Naive thymus-derived CD4-positive, alpha-beta T cell (primary cell): ENCODE measurements at regions of chr20 and their contacts with region 1.

Region 1: GRCh38 chr20:47725248-47725973 is 59.9 kb downstream of the SULF2 start:
- DNase-seq: peak; percentile 55 to 92 (median 88)
- ATAC-seq: peak; percentile 75
- H3K4me3 ChIP-seq: no peak overlapping the region
- H3K4me3 Mint-ChIP-seq: peak overlapping the region in 1 of 10 donors; percentile 48
- H3K27ac ChIP-seq: peak overlapping the region; percentile 6
- H3K27ac Mint-ChIP-seq: peak overlapping the region in 8 of 9 donors; percentile 26 to 99 (median 94)
- H3K4me1 ChIP-seq: peaks cover 15 to 34% of the 10 kb centered on the region in 2 donors
- H3K4me1 Mint-ChIP-seq: peaks cover 39 to 51% (median 44%) of the 10 kb centered on the region in 7 donors
- H3K27me3 ChIP-seq: no peaks in the 10 kb centered on the region
- H3K27me3 Mint-ChIP-seq: peaks cover 0 to 2% (median 0%) of the 10 kb centered on the region in 5 donors

Region 2: DNA sequence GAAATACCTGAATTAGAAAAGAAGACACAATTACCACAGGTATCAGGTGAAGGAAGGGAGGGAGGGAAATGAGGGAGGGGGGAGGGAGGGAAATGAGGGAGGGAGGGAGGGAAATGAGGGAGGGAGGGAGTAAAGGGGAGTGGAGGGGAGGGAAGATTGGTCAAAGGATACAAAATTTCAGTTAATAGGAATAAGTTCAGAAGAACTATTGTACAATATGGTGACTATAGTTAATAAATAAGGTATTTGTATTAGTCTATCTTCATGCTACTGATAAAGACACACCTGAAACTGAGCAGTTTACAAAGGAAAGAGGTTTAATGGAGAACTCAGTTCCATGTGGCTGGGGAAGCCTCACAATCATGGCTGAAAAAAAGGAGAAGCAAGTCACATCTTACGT is 645.0 kb before region 1 on chr20:
- CTCF ChIA-PET with region 1: no interaction called
- POLR2A ChIA-PET with region 1: no interaction called
- intact Hi-C with region 1: no loop called
- DNase-seq: no peak
- ATAC-seq: no peak
- H3K4me3 ChIP-seq: no peak overlapping the region
- H3K4me3 Mint-ChIP-seq: no peak overlapping the region
- H3K27ac ChIP-seq: no peak overlapping the region
- H3K27ac Mint-ChIP-seq: no peak overlapping the region
- H3K4me1 ChIP-seq: no peaks in the 10 kb centered on the region
- H3K4me1 Mint-ChIP-seq: no peaks in the 10 kb centered on the region
- H3K27me3 ChIP-seq: no peaks in the 10 kb centered on the region
- H3K27me3 Mint-ChIP-seq: peaks cover 18 to 50% (median 38%) of the 10 kb centered on the region in 5 donors

Region 3: GRCh38 chr20:47677635-47678453 is 47.6 kb before region 1 on chr20:
- CTCF ChIA-PET with region 1: no interaction called
- POLR2A ChIA-PET with region 1: no interaction called
- intact Hi-C with region 1: loop called in 1 of 2 experiments (anchors 1 kb)
- DNase-seq: peak; percentile 18 to 67 (median 42)
- ATAC-seq: peak; percentile 63
- H3K4me3 ChIP-seq: no peak overlapping the region
- H3K4me3 Mint-ChIP-seq: no peak overlapping the region
- H3K27ac ChIP-seq: no peak overlapping the region
- H3K27ac Mint-ChIP-seq: peak overlapping the region in 2 of 9 donors; percentile 15 to 76
- H3K4me1 ChIP-seq: no peaks in the 10 kb centered on the region
- H3K4me1 Mint-ChIP-seq: peaks cover 0 to 5% (median 0%) of the 10 kb centered on the region in 7 donors
- H3K27me3 ChIP-seq: no peaks in the 10 kb centered on the region
- H3K27me3 Mint-ChIP-seq: peaks cover 0 to 3% (median 0%) of the 10 kb centered on the region in 5 donors

Region 4: DNA sequence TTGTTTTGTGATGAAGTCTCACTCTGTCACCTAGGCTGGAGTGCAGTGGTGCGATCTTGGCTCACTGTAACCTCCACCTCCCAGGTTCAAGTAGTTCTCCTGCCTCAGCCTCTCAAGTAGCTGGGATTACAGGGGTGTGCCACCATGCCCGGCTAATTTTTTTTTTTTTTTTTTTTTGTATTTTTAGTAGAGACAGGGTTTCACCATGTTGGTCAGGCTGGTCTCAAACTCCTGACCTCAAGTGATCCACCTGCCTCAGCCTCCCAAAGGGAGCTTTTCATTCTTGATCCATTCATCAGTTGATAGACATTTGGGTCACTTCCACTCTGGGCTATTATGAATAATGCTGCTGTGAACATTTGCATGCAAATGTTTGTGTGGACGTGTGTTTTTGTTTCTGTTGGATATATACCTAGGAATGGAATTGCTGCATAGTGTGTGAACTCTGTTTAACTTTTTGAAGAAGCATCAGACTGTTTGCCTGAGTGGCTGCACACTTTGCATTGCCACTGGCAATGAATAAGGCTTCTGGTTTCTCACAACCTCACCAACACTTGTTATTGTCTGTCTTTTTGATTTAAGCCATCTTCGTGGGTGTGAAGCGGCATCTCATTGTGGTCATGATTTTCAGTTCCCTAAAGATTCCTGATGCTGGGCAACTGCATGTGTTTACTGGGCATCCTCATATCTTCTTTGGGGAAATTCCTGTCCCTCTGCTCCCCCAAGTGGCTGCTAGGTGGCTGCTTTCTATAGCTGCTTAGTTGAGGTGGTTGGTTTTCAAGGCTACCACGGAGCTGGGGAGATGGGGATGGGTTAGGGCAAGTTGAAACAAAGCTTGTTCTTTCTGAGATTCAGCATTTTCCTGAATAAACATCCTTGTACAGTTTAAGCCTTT is 463.5 kb after region 1 on chr20:
- CTCF ChIA-PET with region 1: no interaction called
- POLR2A ChIA-PET with region 1: no interaction called
- intact Hi-C with region 1: loop called in 1 of 2 experiments (anchors 10 kb)
- DNase-seq: no peak
- ATAC-seq: no peak
- H3K4me3 ChIP-seq: no peak overlapping the region
- H3K4me3 Mint-ChIP-seq: no peak overlapping the region
- H3K27ac ChIP-seq: no peak overlapping the region
- H3K27ac Mint-ChIP-seq: no peak overlapping the region
- H3K4me1 ChIP-seq: no peaks in the 10 kb centered on the region
- H3K4me1 Mint-ChIP-seq: no peaks in the 10 kb centered on the region
- H3K27me3 ChIP-seq: no peaks in the 10 kb centered on the region
- H3K27me3 Mint-ChIP-seq: peaks cover 0 to 12% (median 0%) of the 10 kb centered on the region in 5 donors

Region 5: DNA sequence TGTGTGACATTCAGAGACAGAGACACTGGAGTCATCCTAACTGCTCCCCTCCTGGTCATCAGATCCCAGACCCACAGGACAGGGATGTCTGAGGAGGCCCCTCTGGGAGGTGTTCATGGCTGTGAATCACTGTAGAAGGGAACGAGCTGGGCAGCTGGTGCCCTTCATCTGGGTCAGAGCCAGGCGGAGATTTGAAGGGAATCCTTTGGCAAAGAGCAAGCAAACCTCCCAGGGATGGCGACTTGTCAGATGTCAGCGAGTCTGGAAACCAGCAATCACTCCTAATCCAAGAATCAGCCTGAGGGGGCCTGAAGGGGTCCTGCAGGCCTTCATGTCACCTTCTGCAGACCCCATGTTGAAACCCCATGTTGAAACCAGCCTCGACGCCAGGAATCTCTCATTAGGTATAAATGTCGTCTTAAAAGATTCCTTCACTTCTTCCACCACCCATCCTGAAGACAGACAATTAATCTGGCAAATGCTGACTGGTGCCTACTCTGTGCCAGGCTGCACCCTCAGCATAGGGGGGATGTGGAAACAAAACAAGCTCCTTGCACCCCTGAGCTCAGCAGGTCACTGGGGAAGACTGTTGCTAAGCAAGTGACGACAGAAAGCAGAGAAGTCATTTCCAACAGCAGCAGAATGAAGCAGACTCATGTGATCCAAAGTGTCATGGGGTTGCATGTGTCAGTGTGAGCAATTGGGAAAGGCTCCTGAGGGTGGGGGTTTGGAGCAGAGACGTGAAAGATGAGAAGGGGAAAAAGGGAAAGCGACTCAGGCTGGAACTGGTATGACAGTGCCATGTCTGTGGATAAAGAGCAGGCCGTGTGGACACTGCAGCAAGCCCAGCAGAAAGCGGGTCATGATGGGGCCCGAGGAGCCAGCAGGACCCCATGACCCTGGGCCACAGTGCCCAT is 738.2 kb after region 1 on chr20:
- CTCF ChIA-PET with region 1: no interaction called
- POLR2A ChIA-PET with region 1: no interaction called
- intact Hi-C with region 1: loop called in 1 of 2 experiments (anchors 10 kb)
- DNase-seq: no peak
- ATAC-seq: no peak
- H3K4me3 ChIP-seq: no peak overlapping the region
- H3K4me3 Mint-ChIP-seq: no peak overlapping the region
- H3K27ac ChIP-seq: no peak overlapping the region
- H3K27ac Mint-ChIP-seq: no peak overlapping the region
- H3K4me1 ChIP-seq: no peaks in the 10 kb centered on the region
- H3K4me1 Mint-ChIP-seq: peaks cover 0 to 18% (median 5%) of the 10 kb centered on the region in 7 donors
- H3K27me3 ChIP-seq: no peaks in the 10 kb centered on the region
- H3K27me3 Mint-ChIP-seq: peaks cover 0 to 4% (median 0%) of the 10 kb centered on the region in 5 donors